ENCODE measurements at regions of chr14 and their contacts with region 1.

Region 1: DNA sequence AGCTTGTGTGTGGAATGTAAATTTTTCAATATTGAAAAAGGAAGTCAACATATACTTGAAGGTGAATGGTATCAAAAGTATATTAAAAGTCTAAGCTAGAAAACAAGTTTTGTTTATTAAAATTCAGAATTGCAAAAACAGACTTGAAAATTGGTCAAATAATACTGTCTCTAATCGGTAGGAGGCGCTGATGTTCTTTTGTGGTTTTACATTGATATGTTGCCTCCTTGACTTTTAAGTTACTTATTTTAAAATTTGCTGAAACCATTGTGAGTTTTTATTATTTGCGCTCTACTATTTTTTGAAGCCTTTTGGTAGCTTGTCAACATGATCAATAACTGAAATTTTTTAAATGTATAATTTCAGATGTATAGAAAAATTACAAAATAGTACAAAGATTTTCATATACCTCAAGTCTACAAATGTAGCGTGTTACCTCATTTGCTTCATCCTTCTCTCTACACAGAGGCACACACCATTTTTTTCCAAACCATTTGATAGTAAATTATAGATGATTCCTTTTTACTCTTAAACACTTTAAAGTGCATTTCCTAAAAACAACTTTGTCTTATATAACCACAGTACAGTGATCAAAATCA is 6.9 kb downstream of the RTRAF start:
- DNase-seq: peak; percentile 53
- ATAC-seq: no peak
- H3K4me3 ChIP-seq: no peak overlapping the region
- H3K4me3 Mint-ChIP-seq: no peak overlapping the region
- H3K27ac ChIP-seq: no peak overlapping the region
- H3K27ac Mint-ChIP-seq: no peak overlapping the region
- H3K4me1 ChIP-seq: peaks cover 0 to 5% of the 10 kb centered on the region in 2 donors
- H3K4me1 Mint-ChIP-seq: peaks cover 23% of the 10 kb centered on the region
- H3K27me3 ChIP-seq: no peaks in the 10 kb centered on the region
- H3K27me3 Mint-ChIP-seq: no peaks in the 10 kb centered on the region
- CTCF ChIP-seq: peak; percentile 86

Region 2: DNA sequence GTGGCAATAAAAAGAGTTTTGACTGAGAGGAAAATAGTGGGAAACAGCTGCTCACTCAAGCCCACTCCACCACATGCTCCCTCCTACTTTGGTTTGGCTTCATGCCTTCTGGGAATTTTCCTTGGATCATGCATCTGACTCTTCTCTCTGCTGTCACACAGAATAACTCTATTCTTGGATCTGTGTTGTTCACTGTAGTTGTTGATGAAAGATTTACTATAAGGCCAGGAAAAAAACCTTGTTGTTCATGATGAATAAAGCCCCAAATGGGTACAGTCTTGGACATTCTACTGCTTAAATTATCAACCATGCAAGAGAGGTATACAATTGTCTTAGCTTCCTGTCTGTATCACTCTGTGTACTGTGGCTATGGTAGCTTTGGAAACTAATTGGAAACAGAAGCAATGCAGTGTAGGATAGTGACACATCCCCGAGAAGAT is 685.7 kb before region 1 on chr14:
- CTCF ChIA-PET with region 1: no interaction called
- POLR2A ChIA-PET with region 1: no interaction called
- intact Hi-C with region 1: no loop called
- DNase-seq: no peak
- ATAC-seq: no peak
- H3K4me3 ChIP-seq: no peak overlapping the region
- H3K4me3 Mint-ChIP-seq: no peak overlapping the region
- H3K27ac ChIP-seq: no peak overlapping the region
- H3K27ac Mint-ChIP-seq: no peak overlapping the region
- H3K4me1 ChIP-seq: no peaks in the 10 kb centered on the region
- H3K4me1 Mint-ChIP-seq: no peaks in the 10 kb centered on the region
- H3K27me3 ChIP-seq: peaks cover 0 to 4% (median 0%) of the 10 kb centered on the region in 4 experiments
- H3K27me3 Mint-ChIP-seq: peaks cover 4% of the 10 kb centered on the region
- CTCF ChIP-seq: no peak

Region 3: GRCh38 chr14:52068615-52069303 is 72.5 kb after region 1 on chr14 and contains the start of gene NID2:
- CTCF ChIA-PET with region 1: no interaction called
- POLR2A ChIA-PET with region 1: no interaction called
- intact Hi-C with region 1: no loop called
- DNase-seq: peak; percentile 41
- ATAC-seq: peak; percentile 62
- H3K4me3 ChIP-seq: peak within 1 kb of the TSS; percentile 16 to 59 (median 49)
- H3K4me3 Mint-ChIP-seq: peak within 1 kb of the TSS; percentile 74
- H3K27ac ChIP-seq: no peak within 1 kb of the TSS
- H3K27ac Mint-ChIP-seq: no peak within 1 kb of the TSS
- H3K4me1 ChIP-seq: peaks cover 27 to 28% of the 10 kb centered on the region in 2 donors
- H3K4me1 Mint-ChIP-seq: peaks cover 22% of the 10 kb centered on the region
- H3K27me3 ChIP-seq: peaks cover 0 to 42% (median 27%) of the 10 kb centered on the region in 4 experiments
- H3K27me3 Mint-ChIP-seq: peaks cover 36% of the 10 kb centered on the region
- CTCF ChIP-seq: no peak
- total RNA-seq, gene NID2: not detected in 2 replicates

Region 4: GRCh38 chr14:52473557-52473956 is 477.3 kb after region 1 on chr14:
- CTCF ChIA-PET with region 1: no interaction called
- POLR2A ChIA-PET with region 1: no interaction called
- intact Hi-C with region 1: loop called (anchors 5 kb)
- DNase-seq: peak; percentile 50
- ATAC-seq: no peak
- H3K4me3 ChIP-seq: no peak overlapping the region
- H3K4me3 Mint-ChIP-seq: no peak overlapping the region
- H3K27ac ChIP-seq: no peak overlapping the region
- H3K27ac Mint-ChIP-seq: no peak overlapping the region
- H3K4me1 ChIP-seq: no peaks in the 10 kb centered on the region
- H3K4me1 Mint-ChIP-seq: no peaks in the 10 kb centered on the region
- H3K27me3 ChIP-seq: no peaks in the 10 kb centered on the region
- H3K27me3 Mint-ChIP-seq: no peaks in the 10 kb centered on the region
- CTCF ChIP-seq: peak; percentile 50